GM12878 (cell line): ENCODE measurements at regions of chr2 and their contacts with region 1.

Region 1: GRCh38 chr2:176753752-176754474 is 458.7 kb upstream of the HNRNPA3 start:
- DNase-seq: no peak
- ATAC-seq: peak; percentile 64
- H3K4me3 ChIP-seq: no peak overlapping the region
- H3K27ac ChIP-seq: no peak overlapping the region
- H3K4me1 ChIP-seq: no peaks in the 10 kb centered on the region
- H3K27me3 ChIP-seq: no peaks in the 10 kb centered on the region
- CTCF ChIP-seq: no peak
- EP300 ChIP-seq: no peak
- POLR2A ChIP-seq: no peak
- RAD21 ChIP-seq: no peak

Region 2: GRCh38 chr2:176725873-176726645 is 27.9 kb before region 1 on chr2:
- CTCF ChIA-PET with region 1: no interaction called
- POLR2A ChIA-PET with region 1: no interaction called
- RAD21 ChIA-PET with region 1: no interaction called
- SMC1A ChIA-PET with region 1: no interaction called
- in situ Hi-C with region 1: no loop called
- intact Hi-C with region 1: no loop called
- DNase-seq: no peak
- ATAC-seq: no peak
- H3K4me3 ChIP-seq: no peak overlapping the region
- H3K27ac ChIP-seq: no peak overlapping the region
- H3K4me1 ChIP-seq: no peaks in the 10 kb centered on the region
- H3K27me3 ChIP-seq: no peaks in the 10 kb centered on the region; a peak in 1 of 4 replicates
- CTCF ChIP-seq: no peak
- EP300 ChIP-seq: no peak
- POLR2A ChIP-seq: no peak
- RAD21 ChIP-seq: no peak

Region 3: GRCh38 chr2:176763851-176764404 is 10.0 kb after region 1 on chr2:
- CTCF ChIA-PET with region 1: interaction called, 4 read pairs
- POLR2A ChIA-PET with region 1: no interaction called
- RAD21 ChIA-PET with region 1: no interaction called
- SMC1A ChIA-PET with region 1: interaction called, 10 read pairs
- in situ Hi-C with region 1: no loop called
- intact Hi-C with region 1: no loop called
- DNase-seq: peak; percentile 16
- ATAC-seq: peak; percentile 82
- H3K4me3 ChIP-seq: no peak overlapping the region
- H3K27ac ChIP-seq: no peak overlapping the region
- H3K4me1 ChIP-seq: peaks cover 8% of the 10 kb centered on the region
- H3K27me3 ChIP-seq: no peaks in the 10 kb centered on the region
- CTCF ChIP-seq: no peak
- EP300 ChIP-seq: no peak
- POLR2A ChIP-seq: no peak
- RAD21 ChIP-seq: no peak